GM10248 (cell line): ENCODE measurements at regions of chr5 and their contacts with region 1.

Region 1: DNA sequence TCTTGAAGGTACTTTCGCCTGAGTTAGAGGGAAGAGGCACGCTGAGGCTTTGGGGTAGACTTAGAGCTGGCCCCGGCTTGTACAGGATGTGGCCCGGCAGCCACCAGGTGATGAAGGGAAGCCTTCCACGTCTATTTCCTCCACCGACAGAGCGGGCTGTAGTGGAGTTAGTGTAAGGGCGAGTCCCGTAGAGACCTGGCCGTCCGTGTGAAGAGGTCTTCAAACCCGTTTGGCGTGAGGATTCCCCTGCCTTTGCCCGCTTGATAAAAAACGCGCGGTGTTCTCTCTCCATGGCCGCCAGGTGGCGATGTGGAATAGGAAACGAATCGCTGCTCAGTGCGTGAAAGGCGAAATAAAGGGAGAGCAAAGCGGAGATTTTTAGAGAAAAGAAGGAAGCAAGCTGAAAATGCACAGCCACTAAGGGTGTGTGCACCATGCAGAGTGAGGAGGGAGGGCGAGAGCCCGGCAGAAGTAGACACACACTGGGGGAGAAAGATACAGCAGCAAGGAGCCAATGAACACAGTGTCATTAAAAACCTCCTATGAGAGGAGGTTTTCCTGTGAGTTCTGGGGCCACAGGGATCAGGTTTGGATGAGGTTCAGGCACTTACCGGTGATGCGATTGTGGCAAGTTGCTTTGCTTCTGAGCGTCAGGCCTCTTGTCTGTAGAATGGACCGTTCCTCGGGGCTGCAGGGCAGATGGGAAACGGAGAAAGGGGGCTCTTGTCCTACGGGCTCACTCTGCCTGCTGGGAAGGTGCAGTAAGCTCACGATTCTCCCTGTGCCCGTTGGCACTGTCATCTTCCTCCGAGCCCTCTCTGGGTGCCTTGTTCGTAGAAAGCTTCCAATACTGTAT is 34.2 kb downstream of the STC2 start:
- DNase-seq: peak; percentile 81
- CTCF ChIP-seq: peak; percentile 90

Region 2: DNA sequence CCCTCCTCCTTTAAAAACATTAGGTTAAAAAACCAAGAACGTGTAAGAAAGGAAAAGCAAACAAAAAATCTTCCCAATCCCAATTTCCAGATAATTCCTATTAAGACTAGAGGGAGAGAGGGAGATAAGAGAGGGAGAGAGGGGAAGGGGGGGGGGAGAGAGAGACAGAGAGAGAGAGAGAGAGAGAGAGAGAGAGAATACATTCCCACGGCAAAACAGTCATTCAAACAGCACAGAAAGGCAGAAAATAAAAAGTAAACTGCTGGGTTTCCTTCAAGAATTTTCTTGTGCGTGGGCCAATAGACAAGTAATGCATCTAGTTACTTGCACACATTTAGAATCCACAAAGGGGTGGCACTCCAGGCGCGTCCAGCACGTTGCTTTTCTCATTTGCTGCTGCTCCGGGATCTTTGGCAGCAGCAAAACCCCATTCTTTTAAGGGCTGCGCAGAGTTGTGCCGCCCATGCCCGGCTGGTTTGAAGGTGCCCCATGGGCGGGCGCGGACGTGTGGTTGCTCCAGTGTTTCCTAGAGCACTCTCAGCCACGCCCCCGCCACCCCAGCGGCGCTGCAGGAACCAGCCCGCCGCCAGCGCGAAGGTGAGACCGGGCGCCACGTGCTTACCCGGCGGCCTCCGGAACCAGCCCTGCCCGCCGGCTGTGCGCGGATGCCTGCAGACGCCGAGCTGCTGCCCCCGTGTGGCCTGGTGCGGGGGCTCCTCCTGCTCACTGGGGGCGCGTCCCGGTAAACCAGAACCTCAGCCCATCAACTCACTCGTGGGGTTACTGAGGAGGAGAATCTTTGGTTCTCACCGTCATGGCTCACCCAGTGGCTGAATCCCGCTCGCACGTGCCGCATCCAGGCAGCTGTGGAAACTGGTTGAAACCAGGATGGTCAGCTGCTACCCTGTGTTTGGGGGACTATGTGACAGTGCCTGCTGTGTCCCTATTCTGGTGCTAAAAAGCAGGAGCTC is 10.4 kb before region 1 on chr5:
- CTCF ChIA-PET with region 1: interaction called, 17 read pairs
- POLR2A ChIA-PET with region 1: no interaction called
- DNase-seq: peak; percentile 83
- CTCF ChIP-seq: peak; percentile 72

Region 3: DNA sequence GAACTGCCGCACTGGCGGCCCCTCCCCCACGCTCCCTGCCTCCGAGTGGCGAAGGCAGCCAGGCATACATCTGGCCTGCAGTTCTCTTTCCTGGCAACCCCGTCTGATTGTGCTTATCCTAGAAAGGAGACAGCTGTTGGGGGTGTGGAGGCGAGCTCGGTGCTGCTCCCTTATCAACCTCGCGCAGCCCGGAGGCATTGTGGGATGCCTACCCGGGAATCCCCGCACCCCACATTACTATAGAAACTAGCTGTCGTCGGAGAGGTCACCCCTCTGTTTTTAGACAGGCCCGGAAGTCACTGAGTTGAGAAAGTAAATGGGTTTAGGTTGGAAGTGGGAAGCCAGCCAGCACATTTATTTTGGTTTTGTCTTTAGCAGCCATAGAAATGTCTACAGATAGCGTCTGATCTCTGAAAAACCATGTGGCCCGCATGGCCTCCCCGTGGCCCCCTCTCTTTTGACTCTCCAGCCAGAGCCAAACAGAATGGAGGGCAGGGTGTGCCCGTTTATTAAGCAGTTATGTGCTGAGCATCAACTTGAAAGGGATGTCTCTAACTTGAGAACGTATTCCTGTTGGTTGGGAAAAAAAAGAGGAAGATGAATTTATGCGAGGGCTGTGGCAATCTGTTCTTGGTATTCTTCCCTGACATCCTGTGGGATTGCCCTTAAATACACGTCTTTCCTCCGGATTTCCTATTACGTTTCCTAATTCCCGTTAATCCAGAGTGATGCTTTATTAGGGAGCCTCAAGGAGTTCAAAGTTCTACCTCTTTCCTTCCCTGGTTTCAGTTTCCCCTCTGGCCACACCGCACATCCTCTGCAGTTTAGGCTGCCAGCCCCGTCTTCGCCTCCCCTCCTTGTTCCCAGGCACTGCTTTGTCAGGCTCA is 30.3 kb after region 1 on chr5:
- CTCF ChIA-PET with region 1: interaction called, 210 read pairs
- POLR2A ChIA-PET with region 1: no interaction called
- DNase-seq: no peak
- CTCF ChIP-seq: no peak

Region 4: DNA sequence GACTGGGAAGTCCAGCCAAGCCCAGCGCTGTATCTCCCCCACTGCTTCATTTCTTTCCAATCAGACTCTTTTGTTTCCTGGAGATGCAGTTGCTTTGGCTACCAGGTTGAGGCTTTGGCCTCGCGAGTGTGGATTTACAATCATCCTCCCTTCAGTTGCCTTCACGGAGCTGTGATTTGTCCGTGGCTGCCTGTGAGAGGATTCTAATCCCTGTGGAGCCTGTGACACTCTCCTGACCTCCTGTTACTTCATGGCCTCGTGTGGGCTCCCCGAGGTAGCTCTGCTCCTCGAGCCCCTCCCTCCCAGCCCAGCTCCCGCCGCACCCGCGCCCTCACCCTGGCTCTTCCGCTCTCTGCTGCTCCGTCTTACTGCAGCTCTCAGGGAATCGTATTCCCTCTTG is 141.4 kb after region 1 on chr5:
- CTCF ChIA-PET with region 1: no interaction called
- POLR2A ChIA-PET with region 1: no interaction called
- DNase-seq: no peak
- CTCF ChIP-seq: no peak

Region 5: DNA sequence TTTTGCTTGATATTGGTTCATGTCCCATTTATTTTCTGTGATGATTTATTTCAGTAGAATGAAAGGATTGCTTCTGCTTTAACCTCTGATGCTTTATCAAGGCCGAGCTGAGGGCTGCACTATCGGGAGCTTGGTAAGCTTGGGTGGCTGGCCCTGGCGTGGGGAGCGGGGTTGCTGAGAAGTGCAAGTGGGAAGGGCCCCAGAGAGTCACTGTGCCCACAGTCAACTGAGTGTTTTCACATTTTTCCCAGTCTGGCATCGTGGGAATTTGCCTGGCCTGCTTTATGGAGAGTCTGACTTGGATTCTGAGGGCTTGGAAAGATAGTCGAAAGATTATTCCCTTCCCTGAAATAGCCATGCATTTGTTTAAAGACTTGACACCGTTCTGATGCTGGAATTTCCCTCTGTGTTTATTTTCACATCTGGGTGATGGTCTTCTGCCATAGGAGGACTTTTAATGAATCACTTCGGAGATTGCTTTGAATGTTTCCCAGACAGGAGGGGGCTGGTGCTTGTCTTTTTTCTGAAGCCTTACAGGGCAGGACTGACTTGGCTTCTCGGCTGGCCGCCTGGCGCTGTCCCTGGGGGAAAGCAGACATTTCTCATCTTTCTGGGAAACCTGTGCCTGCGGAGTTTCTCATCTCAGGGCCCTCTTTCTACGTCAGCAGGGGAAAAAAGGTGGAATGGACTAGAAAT is 183.4 kb after region 1 on chr5:
- CTCF ChIA-PET with region 1: no interaction called
- POLR2A ChIA-PET with region 1: no interaction called
- DNase-seq: no peak
- CTCF ChIP-seq: no peak

Region 6: DNA sequence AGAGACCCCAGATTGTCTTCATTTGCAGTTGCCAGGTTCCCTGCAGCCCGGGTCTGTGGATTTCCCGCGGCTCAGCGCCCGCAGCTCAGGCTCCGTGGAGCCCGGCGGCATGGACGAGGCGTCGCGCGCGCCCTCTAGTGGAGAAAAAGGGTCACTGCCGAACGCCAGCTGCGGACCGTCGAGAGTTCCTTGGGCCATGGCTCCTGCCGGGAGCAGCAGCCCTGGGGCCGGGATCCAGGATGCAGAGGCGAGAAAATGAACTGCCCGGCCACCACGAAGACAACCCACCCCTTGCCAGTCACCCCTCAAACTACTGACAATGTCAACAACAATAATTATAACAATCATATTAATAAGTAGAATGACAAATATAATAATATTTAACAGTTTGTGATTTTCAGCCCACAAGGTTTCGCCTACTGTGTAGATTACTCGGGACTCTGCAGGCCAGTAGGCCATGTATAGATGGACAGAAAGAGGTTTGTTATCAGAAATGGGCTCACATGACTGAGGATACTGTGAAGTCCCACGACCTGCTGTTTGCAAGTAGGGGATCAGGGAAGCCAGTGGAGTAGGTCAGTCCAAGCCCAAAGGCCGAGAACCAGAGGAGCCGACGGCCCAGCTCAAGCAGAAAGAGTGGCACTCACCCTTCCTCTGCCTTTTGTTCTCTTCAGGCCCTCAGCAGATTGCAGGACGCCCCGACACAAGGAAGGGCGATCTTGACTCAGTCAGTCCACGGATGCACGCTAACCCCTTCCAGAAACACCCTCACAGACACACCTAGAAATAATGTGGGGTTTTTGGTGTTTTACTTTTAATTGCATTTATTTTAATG is 279.3 kb after region 1 on chr5:
- CTCF ChIA-PET with region 1: interaction called, 48 read pairs
- POLR2A ChIA-PET with region 1: no interaction called
- DNase-seq: peak; percentile 83
- CTCF ChIP-seq: peak; percentile 99